SK-N-SH (cell line): ENCODE measurements at regions of chr10 and their contacts with region 1.

Region 1: GRCh38 chr10:114304017-114304570 is 65.0 kb downstream of the VWA2 start:
- DNase-seq: peak; percentile 86
- H3K4me3 ChIP-seq: peak overlapping the region; percentile 65 to 74
- H3K27ac ChIP-seq: peak overlapping the region; percentile 38 to 60; a peak in 3 of 4 replicates
- H3K4me1 ChIP-seq: peaks cover 0 to 11% of the 10 kb centered on the region in 2 experiments; a peak in 1 of 4 replicates
- H3K27me3 ChIP-seq: no peaks in the 10 kb centered on the region
- CTCF ChIP-seq: peak; percentile 80
- EP300 ChIP-seq: no peak
- RAD21 ChIP-seq: peak; percentile 96

Region 2: DNA sequence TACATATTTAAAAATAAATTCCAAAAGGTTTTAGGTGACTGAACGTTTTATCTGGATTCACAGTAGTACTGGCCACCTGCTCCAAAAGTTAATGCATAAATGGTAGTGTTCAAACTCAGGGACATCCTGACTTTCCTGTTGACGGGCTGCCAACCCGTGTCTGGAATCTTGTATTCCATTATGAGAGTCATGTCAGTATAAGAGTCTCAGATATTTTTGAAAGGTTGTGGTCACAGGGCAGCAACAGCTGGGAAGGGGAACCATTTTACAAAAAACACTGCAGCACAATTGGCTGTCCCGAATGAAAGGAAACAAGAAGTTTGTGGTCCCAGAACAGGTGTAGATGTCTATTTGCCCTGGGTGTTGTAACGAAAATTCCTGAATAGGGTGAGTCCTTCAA is 122.1 kb before region 1 on chr10:
- CTCF ChIA-PET with region 1: no interaction called
- POLR2A ChIA-PET with region 1: no interaction called
- DNase-seq: no peak
- H3K4me3 ChIP-seq: no peak overlapping the region
- H3K27ac ChIP-seq: no peak overlapping the region
- H3K4me1 ChIP-seq: no peaks in the 10 kb centered on the region; a peak in 1 of 4 replicates
- H3K27me3 ChIP-seq: no peaks in the 10 kb centered on the region
- CTCF ChIP-seq: no peak
- EP300 ChIP-seq: no peak
- RAD21 ChIP-seq: no peak

Region 3: GRCh38 chr10:114320249-114321116 is 16.4 kb after region 1 on chr10:
- CTCF ChIA-PET with region 1: interaction called, 17 read pairs
- POLR2A ChIA-PET with region 1: no interaction called
- DNase-seq: no peak
- H3K4me3 ChIP-seq: no peak overlapping the region
- H3K27ac ChIP-seq: no peak overlapping the region
- H3K4me1 ChIP-seq: peaks cover 0 to 12% of the 10 kb centered on the region in 2 experiments; a peak in 1 of 4 replicates
- H3K27me3 ChIP-seq: no peaks in the 10 kb centered on the region; the same call in 1 of the 2 replicates
- CTCF ChIP-seq: no peak
- EP300 ChIP-seq: no peak
- RAD21 ChIP-seq: no peak

Region 4: GRCh38 chr10:114397651-114398145 is 93.6 kb after region 1 on chr10:
- CTCF ChIA-PET with region 1: interaction called, 30 read pairs
- POLR2A ChIA-PET with region 1: no interaction called
- DNase-seq: no peak
- H3K4me3 ChIP-seq: no peak overlapping the region
- H3K27ac ChIP-seq: no peak overlapping the region
- H3K4me1 ChIP-seq: no peaks in the 10 kb centered on the region; a peak in 1 of 4 replicates
- H3K27me3 ChIP-seq: peaks cover 32% of the 10 kb centered on the region; the same call in 1 of the 2 replicates
- CTCF ChIP-seq: no peak
- EP300 ChIP-seq: no peak
- RAD21 ChIP-seq: no peak

Region 5: GRCh38 chr10:114444819-114445218 is 140.7 kb after region 1 on chr10:
- CTCF ChIA-PET with region 1: interaction called, 20 read pairs
- POLR2A ChIA-PET with region 1: interaction called, 4 read pairs
- DNase-seq: no peak
- H3K4me3 ChIP-seq: no peak overlapping the region
- H3K27ac ChIP-seq: no peak overlapping the region
- H3K4me1 ChIP-seq: peaks cover 0 to 3% of the 10 kb centered on the region in 2 experiments; a peak in 1 of 4 replicates
- H3K27me3 ChIP-seq: no peaks in the 10 kb centered on the region
- CTCF ChIP-seq: no peak
- EP300 ChIP-seq: no peak
- RAD21 ChIP-seq: no peak

Region 6: DNA sequence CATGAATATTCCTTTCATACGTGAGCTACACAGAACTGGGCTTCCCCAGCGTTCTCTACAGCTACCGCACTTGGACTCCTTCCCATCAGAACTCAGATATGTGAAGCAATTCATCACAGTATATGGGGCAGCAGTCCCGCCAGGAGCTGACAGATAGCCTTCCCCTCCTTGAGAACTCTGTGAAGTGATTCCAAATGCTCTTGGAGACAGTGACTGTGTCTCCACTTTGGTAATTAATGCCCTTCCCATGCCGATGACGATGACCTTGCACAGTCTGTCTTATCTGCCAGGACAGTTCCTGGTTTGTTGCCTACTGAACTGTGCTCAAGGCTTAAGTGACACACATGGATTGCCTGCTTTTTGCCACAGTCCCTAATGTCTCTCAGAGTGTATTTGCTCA is 175.2 kb after region 1 on chr10:
- CTCF ChIA-PET with region 1: interaction called, 27 read pairs
- POLR2A ChIA-PET with region 1: no interaction called
- DNase-seq: peak; percentile 27
- H3K4me3 ChIP-seq: no peak overlapping the region
- H3K27ac ChIP-seq: no peak overlapping the region
- H3K4me1 ChIP-seq: peaks cover 0 to 29% of the 10 kb centered on the region in 2 experiments; a peak in 2 of 4 replicates
- H3K27me3 ChIP-seq: no peaks in the 10 kb centered on the region
- CTCF ChIP-seq: no peak
- EP300 ChIP-seq: no peak
- RAD21 ChIP-seq: no peak

Region 7: GRCh38 chr10:114550756-114551635 is 246.9 kb after region 1 on chr10:
- CTCF ChIA-PET with region 1: interaction called, 87 read pairs
- POLR2A ChIA-PET with region 1: interaction called, 3 read pairs
- DNase-seq: no peak
- H3K4me3 ChIP-seq: no peak overlapping the region; a peak in 1 of 4 replicates
- H3K27ac ChIP-seq: peak overlapping the region; percentile 11 to 29; a peak in 1 of 4 replicates
- H3K4me1 ChIP-seq: peaks cover 6 to 11% of the 10 kb centered on the region in 2 experiments; a peak in 2 of 4 replicates
- H3K27me3 ChIP-seq: no peaks in the 10 kb centered on the region
- CTCF ChIP-seq: peak; percentile 68
- EP300 ChIP-seq: no peak
- RAD21 ChIP-seq: peak; percentile 63